Activated T-helper 1 cell treated with anti-CD3 and anti-CD28 coated beads, Interleukin-12 subunit alpha, Interleukin-12 subunit beta, Interleukin-2, Interleukin-4 antibody, amounts not matched to agents 30 ng/mL and 10 ng/mL and 1 ng/mL, durations not matched to agents 14 hours and 24 hours and 36 hours (primary cell): ENCODE measurements at regions of chr7 and their contacts with region 1.

Region 1: GRCh38 chr7:114832906-114833595 is 88.8 kb upstream of the MDFIC start:
- DNase-seq: no peak
- H3K4me3 Mint-ChIP-seq: no peak overlapping the region
- H3K27ac Mint-ChIP-seq: peak overlapping the region; percentile 94
- H3K4me1 Mint-ChIP-seq: peaks cover 33% of the 10 kb centered on the region
- H3K27me3 Mint-ChIP-seq: no peaks in the 10 kb centered on the region

Region 2: DNA sequence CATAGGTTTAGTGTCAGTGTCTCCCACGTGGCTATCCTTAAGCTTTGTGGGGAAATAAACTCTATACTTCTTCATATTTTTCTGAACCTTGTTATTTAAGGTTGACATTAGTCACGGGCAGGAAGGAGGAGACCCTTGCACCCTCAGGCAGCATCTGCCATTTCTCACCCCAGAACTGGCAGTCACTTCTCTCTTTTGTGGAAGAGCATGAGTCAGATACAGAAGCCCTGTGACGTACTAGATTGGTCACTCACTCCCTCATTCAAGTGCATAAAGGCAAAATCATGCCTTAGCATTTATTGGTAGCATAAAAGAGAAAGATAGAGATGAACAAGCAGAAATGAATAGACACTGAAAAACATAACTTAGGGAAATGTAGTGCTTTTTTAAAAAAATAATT is 117.1 kb before region 1 on chr7:
- intact Hi-C with region 1: loop called (anchors 1 kb)
- DNase-seq: no peak
- H3K4me3 Mint-ChIP-seq: no peak overlapping the region
- H3K27ac Mint-ChIP-seq: no peak overlapping the region
- H3K4me1 Mint-ChIP-seq: no peaks in the 10 kb centered on the region
- H3K27me3 Mint-ChIP-seq: no peaks in the 10 kb centered on the region

Region 3: DNA sequence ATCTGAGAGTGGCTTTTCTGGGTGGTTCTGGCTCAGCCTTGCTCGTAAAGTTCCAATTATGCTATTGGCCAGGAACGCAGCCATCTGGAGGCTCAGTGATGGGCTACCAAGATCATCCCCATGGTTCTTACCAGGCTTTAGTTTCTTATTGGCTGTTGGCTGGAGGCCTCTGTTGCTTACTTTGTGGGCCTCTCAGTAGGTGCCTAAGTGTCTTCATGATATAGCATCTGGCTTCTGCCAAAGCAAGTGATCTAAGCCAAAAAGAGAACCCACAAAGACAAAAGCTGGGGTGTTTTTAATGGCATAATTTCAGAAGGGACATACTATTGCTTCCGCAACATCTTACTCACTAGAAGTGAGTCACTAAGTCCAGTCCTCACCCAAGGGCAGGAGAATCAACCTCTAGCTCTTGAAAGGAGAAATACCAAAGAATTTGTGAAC is 43.2 kb before region 1 on chr7:
- intact Hi-C with region 1: loop called (anchors 1 kb)
- DNase-seq: no peak
- H3K4me3 Mint-ChIP-seq: no peak overlapping the region
- H3K27ac Mint-ChIP-seq: peak overlapping the region; percentile 65
- H3K4me1 Mint-ChIP-seq: peaks cover 42% of the 10 kb centered on the region
- H3K27me3 Mint-ChIP-seq: no peaks in the 10 kb centered on the region

Region 4: GRCh38 chr7:114799628-114800028 is 33.4 kb before region 1 on chr7:
- intact Hi-C with region 1: loop called (anchors 1 kb)
- DNase-seq: no peak
- H3K4me3 Mint-ChIP-seq: no peak overlapping the region
- H3K27ac Mint-ChIP-seq: peak overlapping the region; percentile 94
- H3K4me1 Mint-ChIP-seq: peaks cover 48% of the 10 kb centered on the region
- H3K27me3 Mint-ChIP-seq: no peaks in the 10 kb centered on the region

Region 5: GRCh38 chr7:114819616-114820362 is 13.3 kb before region 1 on chr7:
- intact Hi-C with region 1: loop called (anchors 2 kb)
- DNase-seq: no peak
- H3K4me3 Mint-ChIP-seq: no peak overlapping the region
- H3K27ac Mint-ChIP-seq: no peak overlapping the region
- H3K4me1 Mint-ChIP-seq: peaks cover 11% of the 10 kb centered on the region
- H3K27me3 Mint-ChIP-seq: no peaks in the 10 kb centered on the region

Region 6: GRCh38 chr7:114889646-114890285 is 56.7 kb after region 1 on chr7:
- intact Hi-C with region 1: loop called (anchors 1 kb)
- DNase-seq: peak; percentile 6
- H3K4me3 Mint-ChIP-seq: peak overlapping the region; percentile 15
- H3K27ac Mint-ChIP-seq: peak overlapping the region; percentile 89
- H3K4me1 Mint-ChIP-seq: peaks cover 55% of the 10 kb centered on the region
- H3K27me3 Mint-ChIP-seq: no peaks in the 10 kb centered on the region

Region 7: DNA sequence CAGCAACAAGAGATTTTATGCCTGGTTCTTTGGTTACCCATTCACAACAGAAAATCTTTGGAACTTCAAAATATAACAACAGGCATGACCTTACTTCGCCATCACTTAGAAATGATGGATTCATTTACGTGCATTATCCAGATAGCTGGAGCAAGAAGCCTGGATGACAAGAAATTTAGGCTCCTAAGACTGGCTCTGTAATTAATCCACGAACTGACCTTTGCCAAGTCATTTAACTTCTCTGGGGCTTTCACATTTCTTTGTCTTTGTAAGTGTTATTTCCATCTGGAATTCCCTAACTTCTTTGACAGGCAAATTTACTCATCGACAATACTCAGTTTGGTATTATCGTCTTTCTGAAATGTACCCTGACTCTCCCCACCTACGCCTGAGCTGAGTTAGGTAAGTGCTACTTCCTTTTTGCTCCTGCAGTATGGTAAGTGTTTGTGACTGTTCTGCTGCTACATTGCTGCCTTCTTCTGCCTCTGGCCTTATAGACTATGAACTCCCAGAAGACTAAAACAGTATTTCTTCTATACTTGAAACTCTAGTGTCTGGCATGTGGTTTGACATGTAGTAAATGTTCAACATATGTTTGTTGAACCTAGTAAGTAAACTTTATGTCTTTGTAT is 83.3 kb after region 1 on chr7:
- intact Hi-C with region 1: loop called (anchors 1 kb)
- DNase-seq: no peak
- H3K4me3 Mint-ChIP-seq: peak overlapping the region; percentile 70
- H3K27ac Mint-ChIP-seq: peak overlapping the region; percentile 98
- H3K4me1 Mint-ChIP-seq: peaks cover 61% of the 10 kb centered on the region
- H3K27me3 Mint-ChIP-seq: no peaks in the 10 kb centered on the region